ENCODE measurements at regions of chr17 and their contacts with region 1.

Region 1: DNA sequence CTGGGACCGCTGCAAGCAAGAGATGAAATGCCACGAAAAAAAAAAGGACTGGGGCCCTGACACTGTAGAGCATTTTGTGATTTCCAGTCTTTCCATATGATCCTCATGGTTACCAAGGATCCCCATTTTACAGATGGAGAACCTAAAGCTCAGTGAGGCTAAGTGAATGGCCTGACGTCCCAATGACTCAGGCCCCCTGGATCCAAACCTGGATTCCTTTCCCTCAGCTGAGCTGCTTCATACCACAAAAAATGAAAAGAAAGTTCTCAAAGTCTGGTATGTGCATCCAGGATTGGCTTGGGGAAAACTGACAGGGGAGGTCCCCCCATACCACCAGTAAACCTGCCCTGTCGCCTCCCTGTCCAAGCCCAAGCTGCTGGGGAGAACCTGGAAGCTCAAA is 80.5 kb downstream of the TEX14 start:
- DNase-seq: no peak
- H3K4me3 ChIP-seq: no peak overlapping the region
- H3K27ac ChIP-seq: no peak overlapping the region
- H3K4me1 ChIP-seq: no peaks in the 10 kb centered on the region
- H3K27me3 ChIP-seq: no peaks in the 10 kb centered on the region
- CTCF ChIP-seq: no peak
- EP300 ChIP-seq: no peak
- POLR2A ChIP-seq: no peak

Region 2: GRCh38 chr17:58520843-58521430 is 90.4 kb before region 1 on chr17:
- in situ Hi-C with region 1: no loop called
- intact Hi-C with region 1: no loop called
- DNase-seq: no peak
- H3K4me3 ChIP-seq: no peak overlapping the region
- H3K27ac ChIP-seq: no peak overlapping the region
- H3K4me1 ChIP-seq: peaks cover 11 to 27% (median 16%) of the 10 kb centered on the region in 4 donors
- H3K27me3 ChIP-seq: no peaks in the 10 kb centered on the region
- CTCF ChIP-seq: peak; percentile 18 to 54 (median 35)
- EP300 ChIP-seq: no peak
- POLR2A ChIP-seq: no peak

Region 3: DNA sequence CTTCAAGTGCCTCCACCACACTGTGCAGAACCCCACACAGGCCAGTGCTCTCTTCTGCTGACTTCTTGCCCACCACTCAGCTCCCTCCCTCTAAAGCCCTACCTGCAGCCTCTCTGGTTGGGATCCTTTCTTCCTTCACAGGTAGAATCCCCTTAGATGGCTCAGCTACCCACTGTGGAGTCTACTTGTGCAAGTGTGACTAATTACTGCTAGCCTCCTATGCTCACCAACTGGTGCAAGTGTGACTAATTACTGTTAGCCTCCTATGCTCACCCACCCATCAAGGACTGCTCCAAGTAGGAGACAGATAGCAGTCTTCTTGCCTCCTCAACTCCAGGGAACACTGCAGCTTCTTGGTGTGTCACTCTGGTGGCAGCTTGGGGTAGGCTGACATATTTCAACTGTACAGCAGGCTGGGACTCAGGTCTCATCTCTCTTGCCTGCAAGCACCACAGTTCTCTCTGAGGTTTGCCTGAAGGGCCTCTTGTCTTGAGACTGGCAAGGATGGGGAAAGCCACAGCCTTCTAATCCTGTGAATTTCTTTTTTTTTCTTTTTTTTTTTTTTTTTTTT is 37.0 kb after region 1 on chr17:
- in situ Hi-C with region 1: no loop called
- intact Hi-C with region 1: loop called (anchors 1 kb)
- DNase-seq: no peak
- H3K4me3 ChIP-seq: no peak overlapping the region
- H3K27ac ChIP-seq: no peak overlapping the region
- H3K4me1 ChIP-seq: no peaks in the 10 kb centered on the region
- H3K27me3 ChIP-seq: no peaks in the 10 kb centered on the region
- CTCF ChIP-seq: no peak
- EP300 ChIP-seq: no peak
- POLR2A ChIP-seq: no peak

Region 4: GRCh38 chr17:58808645-58809563 is 197.6 kb after region 1 on chr17:
- in situ Hi-C with region 1: no loop called
- intact Hi-C with region 1: no loop called
- DNase-seq: no peak
- H3K4me3 ChIP-seq: no peak overlapping the region
- H3K27ac ChIP-seq: no peak overlapping the region
- H3K4me1 ChIP-seq: no peaks in the 10 kb centered on the region
- H3K27me3 ChIP-seq: no peaks in the 10 kb centered on the region
- CTCF ChIP-seq: no peak
- EP300 ChIP-seq: no peak
- POLR2A ChIP-seq: no peak